ENCODE measurements at regions of chr12 and their contacts with region 1.

Region 1: GRCh38 chr12:54017878-54018467 is 9.2 kb downstream of the HOXC8 start:
- DNase-seq: peak in 1 of 2 donors; percentile 95
- H3K4me3 ChIP-seq: peak overlapping the region; percentile 47 to 71
- H3K27ac ChIP-seq: peak overlapping the region; percentile 94 to 96
- H3K4me1 ChIP-seq: peaks cover 0 to 10% of the 10 kb centered on the region in 2 donors
- H3K27me3 ChIP-seq: no peaks in the 10 kb centered on the region
- CTCF ChIP-seq: no peak

Region 2: GRCh38 chr12:54126696-54127537 is 108.9 kb after region 1 on chr12:
- intact Hi-C with region 1: loop called (anchors 5 kb)
- DNase-seq: peak in 1 of 2 donors; percentile 92
- H3K4me3 ChIP-seq: peak overlapping the region; percentile 83 to 94
- H3K27ac ChIP-seq: peak overlapping the region; percentile 71 to 92
- H3K4me1 ChIP-seq: peaks cover 8 to 10% of the 10 kb centered on the region in 2 donors
- H3K27me3 ChIP-seq: no peaks in the 10 kb centered on the region
- CTCF ChIP-seq: no peak

Region 3: DNA sequence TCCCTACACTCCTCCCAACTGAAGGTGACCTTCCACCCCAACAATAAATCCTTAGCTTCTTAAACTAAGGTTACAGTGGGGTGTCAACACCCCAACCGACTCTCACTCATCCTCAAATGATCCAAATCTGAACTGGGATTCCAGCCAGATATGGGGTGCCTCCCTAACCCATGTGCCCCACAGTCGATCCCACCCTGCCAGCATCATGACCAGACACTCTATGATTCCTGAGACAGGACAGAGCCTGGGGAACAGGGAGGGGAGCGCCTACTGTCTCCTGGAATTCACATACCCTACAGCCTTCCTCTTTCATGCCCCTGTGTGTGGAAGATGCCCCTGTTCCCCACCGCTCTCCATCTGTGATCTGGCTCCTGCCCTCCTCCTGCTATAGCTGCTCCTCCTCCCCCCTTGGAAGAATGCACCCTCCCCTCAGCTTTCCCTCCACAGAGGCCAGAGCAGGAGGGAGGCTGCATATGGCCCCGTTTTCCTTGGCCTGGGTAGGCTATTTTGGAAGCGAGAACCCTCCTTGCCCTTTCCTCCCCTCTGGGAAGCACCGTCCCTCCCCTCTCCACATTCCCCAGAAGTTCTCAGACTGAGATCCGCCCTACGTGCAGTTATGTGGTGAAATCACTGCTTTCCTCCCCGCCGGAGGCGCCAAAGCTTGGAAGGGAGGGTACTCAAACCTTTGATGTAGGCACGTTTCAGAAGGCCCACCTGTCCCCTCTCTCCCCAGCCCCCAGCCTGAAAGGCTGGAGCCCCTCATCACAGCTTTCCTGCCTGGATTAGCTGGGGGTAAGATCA is 122.8 kb after region 1 on chr12:
- intact Hi-C with region 1: loop called (anchors 5 kb)
- DNase-seq: peak in 1 of 2 donors; percentile 87
- H3K4me3 ChIP-seq: peak overlapping the region in 1 of 2 donors; percentile 27
- H3K27ac ChIP-seq: peak overlapping the region; percentile 82 to 88
- H3K4me1 ChIP-seq: peaks cover 4 to 19% of the 10 kb centered on the region in 2 donors
- H3K27me3 ChIP-seq: no peaks in the 10 kb centered on the region
- CTCF ChIP-seq: no peak

Region 4: GRCh38 chr12:54359033-54359761 is 341.2 kb after region 1 on chr12:
- intact Hi-C with region 1: loop called (anchors 10 kb)
- DNase-seq: peak; percentile 96 to 99
- H3K4me3 ChIP-seq: peak overlapping the region; percentile 59 to 74
- H3K27ac ChIP-seq: peak overlapping the region; percentile 78 to 80
- H3K4me1 ChIP-seq: peaks cover 0 to 15% of the 10 kb centered on the region in 2 donors
- H3K27me3 ChIP-seq: no peaks in the 10 kb centered on the region
- CTCF ChIP-seq: no peak

Measured in ascending aorta (tissue), 2 donors.